Activated CD4-positive, alpha-beta memory T cell treated with anti-CD3 and anti-CD28 coated beads for 36 hours (primary cell): ENCODE measurements at regions of chr13 and their contacts with region 1.

Region 1: DNA sequence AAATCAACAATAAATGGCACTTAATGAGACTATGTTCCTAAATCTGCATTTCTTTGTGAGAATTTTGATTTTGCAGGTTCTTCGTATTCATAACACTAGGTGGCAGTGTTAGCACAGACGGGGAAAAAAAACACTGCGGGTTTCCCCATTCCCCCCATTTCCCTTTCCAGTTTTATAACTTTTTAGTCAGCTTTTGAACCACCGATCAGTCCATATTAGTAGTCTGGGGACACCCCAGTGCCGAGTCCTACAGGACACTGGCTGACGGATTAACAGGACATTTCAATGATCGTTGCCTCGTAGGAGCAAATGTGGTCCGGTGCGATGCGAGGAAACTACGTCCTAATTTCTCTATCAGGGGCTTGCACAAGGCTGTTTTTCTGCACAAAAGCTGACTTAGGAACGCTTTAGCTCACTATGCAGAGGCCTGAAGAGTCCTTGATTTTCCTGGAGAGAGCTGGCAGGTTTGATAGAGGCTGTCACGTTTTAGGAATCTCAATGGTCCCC is 234.3 kb downstream of the LMO7 start:
- DNase-seq: peak; percentile 15
- H3K4me3 Mint-ChIP-seq: peak overlapping the region; percentile 54
- H3K27ac Mint-ChIP-seq: no peak overlapping the region
- H3K4me1 Mint-ChIP-seq: peaks cover 20% of the 10 kb centered on the region
- H3K27me3 Mint-ChIP-seq: peaks cover 2% of the 10 kb centered on the region

Region 2: DNA sequence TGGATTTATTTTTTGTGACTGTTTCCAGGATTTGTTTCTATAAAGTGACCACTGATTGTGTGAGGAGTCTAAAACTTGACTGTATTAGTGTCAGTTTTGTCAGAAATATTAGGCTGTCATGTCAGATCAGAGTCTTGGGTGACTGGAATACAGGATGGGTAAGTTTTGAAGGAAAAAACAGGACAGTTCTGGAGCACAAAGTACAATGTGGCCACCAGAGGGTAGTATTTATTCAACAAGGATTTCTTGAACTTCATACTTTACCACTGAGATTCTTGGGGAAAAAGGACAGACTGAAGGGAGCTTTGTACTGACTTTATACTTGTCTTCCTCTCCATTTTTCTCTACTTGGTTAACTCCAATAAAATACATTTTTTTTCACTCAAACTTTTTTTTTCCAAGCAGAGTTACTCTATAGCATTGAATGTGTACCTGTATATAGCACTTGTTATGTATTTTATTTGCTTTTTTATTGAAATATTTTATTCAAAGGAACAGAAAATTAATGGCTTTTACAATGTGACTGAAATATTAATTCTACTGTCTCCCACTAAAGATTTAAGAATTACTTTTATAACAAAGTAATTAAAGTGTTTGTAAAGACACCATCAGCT is 183.2 kb before region 1 on chr13:
- CTCF ChIA-PET with region 1: interaction called, 13 read pairs
- POLR2A ChIA-PET with region 1: no interaction called
- intact Hi-C with region 1: no loop called
- DNase-seq: no peak
- H3K4me3 Mint-ChIP-seq: no peak overlapping the region
- H3K27ac Mint-ChIP-seq: no peak overlapping the region
- H3K4me1 Mint-ChIP-seq: peaks cover 14% of the 10 kb centered on the region
- H3K27me3 Mint-ChIP-seq: no peaks in the 10 kb centered on the region

Region 3: DNA sequence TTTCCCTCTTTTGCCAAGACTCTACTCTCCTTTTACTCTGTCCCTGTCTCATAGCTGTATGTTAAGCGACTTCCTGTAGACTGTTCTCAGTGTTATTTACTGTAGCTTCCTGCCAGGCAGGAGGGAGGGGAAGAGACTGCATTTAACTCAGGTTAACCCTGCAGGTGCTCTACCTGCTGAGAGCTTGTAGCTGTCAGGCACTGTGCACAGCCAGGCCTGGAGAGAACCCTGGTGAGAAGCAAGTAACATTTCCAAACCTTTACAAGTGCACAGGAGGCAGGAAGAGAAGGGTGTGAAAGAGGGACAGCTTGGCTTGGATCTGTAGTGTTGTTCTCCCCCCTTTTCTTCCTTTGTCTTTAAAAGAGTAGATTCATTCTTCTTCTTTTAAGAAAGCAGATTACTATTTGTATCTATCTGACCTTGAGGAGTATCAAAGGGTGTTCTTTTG is 67.3 kb before region 1 on chr13:
- CTCF ChIA-PET with region 1: interaction called, 3 read pairs
- POLR2A ChIA-PET with region 1: no interaction called
- intact Hi-C with region 1: loop called (anchors 5 kb)
- DNase-seq: no peak
- H3K4me3 Mint-ChIP-seq: no peak overlapping the region
- H3K27ac Mint-ChIP-seq: no peak overlapping the region
- H3K4me1 Mint-ChIP-seq: peaks cover 42% of the 10 kb centered on the region
- H3K27me3 Mint-ChIP-seq: no peaks in the 10 kb centered on the region

Region 4: GRCh38 chr13:75850916-75851315 is 19.5 kb before region 1 on chr13:
- CTCF ChIA-PET with region 1: interaction called, 16 read pairs
- POLR2A ChIA-PET with region 1: no interaction called
- intact Hi-C with region 1: no loop called
- DNase-seq: no peak
- H3K4me3 Mint-ChIP-seq: no peak overlapping the region
- H3K27ac Mint-ChIP-seq: no peak overlapping the region
- H3K4me1 Mint-ChIP-seq: no peaks in the 10 kb centered on the region
- H3K27me3 Mint-ChIP-seq: no peaks in the 10 kb centered on the region

Region 5: DNA sequence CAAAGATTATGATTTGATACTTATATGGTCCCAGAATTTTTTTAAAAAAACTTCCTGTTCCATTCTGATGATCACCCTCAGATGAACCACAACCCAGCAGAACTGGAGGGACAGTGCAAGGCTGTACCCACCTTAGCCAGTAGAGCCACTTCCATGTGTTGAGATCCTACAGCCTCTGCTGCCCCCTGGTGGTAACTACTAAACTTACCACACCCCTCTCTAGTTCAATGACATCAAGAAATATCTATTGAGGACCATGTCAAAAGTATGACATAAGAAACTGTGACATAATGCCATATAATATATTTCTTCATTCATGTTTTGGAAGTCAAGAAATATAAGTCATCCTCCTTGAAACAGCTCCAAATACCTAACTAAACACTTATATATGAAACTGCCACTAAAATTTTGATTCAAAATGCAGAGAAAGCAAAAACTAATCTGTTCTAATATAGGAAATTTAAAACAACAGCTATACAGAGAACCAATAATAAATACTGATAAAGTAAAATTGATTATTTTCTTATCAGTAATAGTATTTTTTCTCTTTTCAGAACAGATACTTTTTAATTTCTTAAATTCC is 603.2 kb after region 1 on chr13:
- CTCF ChIA-PET with region 1: interaction called, 82 read pairs
- POLR2A ChIA-PET with region 1: no interaction called
- intact Hi-C with region 1: loop called (anchors 1 kb)
- DNase-seq: peak; percentile 76
- H3K4me3 Mint-ChIP-seq: no peak overlapping the region
- H3K27ac Mint-ChIP-seq: no peak overlapping the region
- H3K4me1 Mint-ChIP-seq: no peaks in the 10 kb centered on the region
- H3K27me3 Mint-ChIP-seq: peaks cover 11% of the 10 kb centered on the region